Dorsolateral prefrontal cortex (tissue), 120 donors: ENCODE measurements at regions of chr10 and their contacts with region 1.

Region 1: GRCh38 chr10:71212318-71213126 is at the start of gene UNC5B:
- DNase-seq: peak; percentile 80 to 97 (median 90)
- H3K4me3 ChIP-seq: peak within 1 kb of the TSS; percentile 67 to 97 (median 89)
- H3K27ac ChIP-seq: peak within 1 kb of the TSS; percentile 66 to 97 (median 92)
- H3K27me3 ChIP-seq: no peaks in the 10 kb centered on the region
- CTCF ChIP-seq: peak in 50 of 56 donors; percentile 13 to 76 (median 44)
- total RNA-seq, gene UNC5B: 12.3 to 77.7 (median 23.7) TPM

Region 2: DNA sequence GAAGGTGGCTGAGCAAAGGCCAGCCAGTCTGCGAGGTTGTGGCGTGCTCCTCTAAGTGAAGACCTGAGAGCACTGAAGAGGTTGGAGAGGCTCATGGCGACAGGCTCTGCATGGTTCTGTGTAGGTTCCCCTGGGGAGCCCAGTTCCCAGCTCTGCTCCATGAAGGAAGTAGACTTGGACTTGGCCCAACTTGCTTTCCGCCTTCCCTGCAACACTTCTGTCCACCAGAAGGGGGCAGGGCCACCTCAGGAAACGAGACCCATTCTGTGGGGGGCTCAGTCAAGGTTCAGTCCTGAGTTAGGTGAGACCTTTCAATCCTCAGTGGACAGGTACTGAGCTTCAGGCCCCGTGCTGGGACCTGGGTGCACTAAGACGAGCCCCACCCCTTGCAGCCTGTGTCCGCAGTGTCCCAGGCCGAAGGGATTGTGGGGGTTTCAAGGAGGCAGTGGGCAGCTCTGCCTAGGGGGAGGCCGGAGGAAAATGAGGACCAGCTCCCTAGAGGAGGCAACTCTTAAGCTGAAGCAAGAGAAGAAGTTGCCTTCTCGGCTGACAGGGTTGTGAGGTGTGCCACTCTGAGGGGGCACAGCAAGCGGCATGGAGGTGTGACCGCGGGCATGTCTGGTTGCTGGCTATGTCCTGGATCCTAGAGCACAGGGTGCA is 309.1 kb before region 1 on chr10:
- intact Hi-C with region 1: loop called in 1 of 2 experiments (anchors 5 kb)
- DNase-seq: peak in 9 of 10 donors; percentile 40 to 75 (median 67)
- H3K4me3 ChIP-seq: no peak overlapping the region
- H3K27ac ChIP-seq: no peak overlapping the region
- H3K27me3 ChIP-seq: no peaks in the 10 kb centered on the region
- CTCF ChIP-seq: peak; percentile 67 to 94 (median 88)

Region 3: GRCh38 chr10:71232089-71232998 is 19.8 kb after region 1 on chr10:
- intact Hi-C with region 1: loop called (anchors 1 to 2 kb)
- DNase-seq: peak; percentile 90 to 99 (median 96)
- H3K4me3 ChIP-seq: peak overlapping the region in 29 of 59 donors; percentile 1 to 37 (median 14)
- H3K27ac ChIP-seq: peak overlapping the region; percentile 82 to 100 (median 98)
- H3K27me3 ChIP-seq: no peaks in the 10 kb centered on the region
- CTCF ChIP-seq: peak in 12 of 56 donors; percentile 2 to 46 (median 22)

Region 4: DNA sequence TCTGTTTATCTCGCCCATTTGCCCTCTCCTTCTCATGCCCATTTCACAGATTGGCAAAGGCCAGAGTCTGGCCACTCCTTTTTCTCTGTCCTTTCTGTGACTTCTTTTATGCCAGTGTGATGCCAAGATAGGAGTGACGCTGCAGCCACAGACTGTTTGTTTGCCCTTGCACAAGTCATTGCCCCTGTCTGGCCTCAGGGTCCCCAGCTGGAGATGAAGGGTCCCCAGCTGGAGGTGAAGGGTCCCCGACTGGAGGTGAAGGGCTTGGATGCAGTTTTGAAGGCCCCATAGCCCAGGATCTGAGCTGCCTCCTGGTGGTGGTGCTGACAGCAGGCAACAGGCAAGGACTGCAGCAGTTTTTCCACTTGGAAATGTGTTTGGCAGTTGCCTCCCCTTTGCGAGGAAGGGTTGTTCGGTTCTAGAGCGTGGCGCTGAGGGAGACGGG is 55.7 kb after region 1 on chr10:
- intact Hi-C with region 1: loop called in 1 of 2 experiments (anchors 2 kb)
- DNase-seq: peak in 7 of 10 donors; percentile 48 to 77 (median 64)
- H3K4me3 ChIP-seq: no peak overlapping the region
- H3K27ac ChIP-seq: peak overlapping the region in 52 of 59 donors; percentile 1 to 86 (median 58)
- H3K27me3 ChIP-seq: no peaks in the 10 kb centered on the region
- CTCF ChIP-seq: peak in 55 of 56 donors; percentile 37 to 78 (median 62)

Region 5: GRCh38 chr10:71713135-71714030 is 500.9 kb after region 1 on chr10:
- intact Hi-C with region 1: loop called in 1 of 2 experiments (anchors 10 kb)
- DNase-seq: peak; percentile 52 to 86 (median 84)
- H3K4me3 ChIP-seq: peak overlapping the region in 7 of 59 donors; percentile 1 to 36 (median 10)
- H3K27ac ChIP-seq: peak overlapping the region; percentile 87 to 99 (median 97)
- H3K27me3 ChIP-seq: no peaks in the 10 kb centered on the region
- CTCF ChIP-seq: peak in 14 of 56 donors; percentile 5 to 49 (median 18)